Activated T-helper 2 cell treated with anti-CD3 and anti-CD28 coated beads, Interferon-gamma antibody, Interleukin-2, Interleukin-4, amounts not matched to agents 10 μg/mL and 5 μg/mL and 100 μg/mL, durations not matched to agents 14 hours and 24 hours and 36 hours (primary cell): ENCODE measurements at regions of chr10 and their contacts with region 1.

Region 1: DNA sequence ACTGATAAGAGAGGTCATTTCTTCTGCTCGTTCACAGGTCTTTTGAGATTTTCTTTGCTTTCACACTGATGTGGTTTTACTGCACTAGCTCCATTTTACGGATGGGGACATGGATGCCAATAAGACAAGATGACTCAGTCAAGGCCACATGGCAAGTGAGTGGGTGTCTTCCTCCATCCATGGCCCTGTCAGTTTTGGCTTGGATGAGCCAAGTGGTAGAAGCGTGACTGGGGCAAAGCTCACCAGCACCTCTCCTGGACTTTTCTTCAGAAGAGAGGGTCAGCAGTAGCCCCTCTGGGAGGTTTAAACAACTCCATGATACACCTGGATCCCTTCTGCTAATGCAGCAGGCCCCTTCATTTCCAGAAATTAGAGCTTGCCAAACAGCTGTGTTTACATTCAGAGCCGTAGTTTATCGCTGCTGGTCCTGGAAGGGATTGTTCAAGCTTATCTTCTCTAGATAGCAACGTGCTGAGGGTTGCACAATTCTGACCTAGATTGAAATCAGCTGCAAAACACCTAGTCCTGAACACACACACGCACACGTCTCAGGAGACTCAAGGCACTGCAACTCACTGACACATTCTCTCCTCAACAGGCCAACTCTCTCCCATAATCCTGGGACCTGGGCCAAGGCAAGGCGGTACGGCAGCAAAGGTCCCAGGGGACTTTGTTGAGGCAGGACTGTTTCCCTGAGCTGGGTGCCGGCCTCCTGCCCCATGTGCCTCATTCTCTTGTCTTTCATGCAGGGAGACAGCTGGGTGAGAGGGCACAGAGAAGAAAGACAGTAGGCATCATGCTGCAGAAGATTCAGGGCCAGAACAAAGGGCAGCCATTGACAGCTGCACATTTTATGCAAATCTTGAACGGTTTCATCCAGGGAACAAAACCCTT is 14.2 kb upstream of the PDCD4 start:
- DNase-seq: peak; percentile 28
- H3K4me3 Mint-ChIP-seq: no peak overlapping the region
- H3K27ac Mint-ChIP-seq: peak overlapping the region; percentile 73
- H3K4me1 Mint-ChIP-seq: peaks cover 55% of the 10 kb centered on the region
- H3K27me3 Mint-ChIP-seq: no peaks in the 10 kb centered on the region

Region 2: GRCh38 chr10:110843031-110843430 is 14.5 kb before region 1 on chr10:
- intact Hi-C with region 1: loop called (anchors 2 kb)
- DNase-seq: peak; percentile 56
- H3K4me3 Mint-ChIP-seq: no peak overlapping the region
- H3K27ac Mint-ChIP-seq: peak overlapping the region; percentile 71
- H3K4me1 Mint-ChIP-seq: peaks cover 30% of the 10 kb centered on the region
- H3K27me3 Mint-ChIP-seq: no peaks in the 10 kb centered on the region